Sigmoid colon (tissue), 7 donors: ENCODE measurements at regions of chr3 and their contacts with region 1.

Region 1: DNA sequence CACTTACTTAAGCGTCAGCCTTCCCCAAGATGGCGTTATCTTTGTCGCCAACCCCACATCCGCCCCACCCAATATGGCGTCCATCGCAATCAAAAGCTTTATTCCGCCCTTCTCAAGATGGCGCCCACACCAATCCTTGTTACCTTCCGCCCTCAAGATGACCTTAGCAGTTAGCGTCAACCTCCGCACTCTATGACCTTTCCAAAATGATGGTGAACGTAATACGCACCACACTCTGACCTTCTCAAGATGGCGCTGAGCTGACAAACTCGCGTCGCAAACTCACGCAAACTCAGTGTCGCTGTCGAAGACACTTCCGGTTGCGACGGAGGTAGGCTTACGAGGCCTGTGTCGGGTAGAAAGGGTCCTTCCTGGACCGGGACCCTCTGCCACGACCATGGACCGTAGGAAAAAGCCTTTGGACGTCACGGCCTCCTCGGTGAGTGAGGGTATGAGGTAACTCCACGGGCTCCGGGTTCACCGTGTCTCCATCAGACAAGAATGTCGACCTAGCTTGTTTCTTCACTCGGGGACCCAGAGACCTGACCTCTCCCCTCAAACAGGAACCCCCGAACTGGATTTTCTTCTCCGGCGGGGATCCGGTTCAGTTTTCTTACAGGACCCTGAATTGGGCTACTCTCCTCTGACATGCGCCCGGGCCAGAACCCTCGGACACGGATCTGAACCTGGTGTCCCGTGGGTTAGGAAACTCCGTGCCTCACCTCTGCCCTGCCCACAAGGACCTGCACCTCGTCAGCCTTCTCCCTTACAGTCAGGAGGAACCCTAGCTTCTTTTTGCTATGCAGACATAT is at the start of gene CCDC174:
- DNase-seq: peak; percentile 98
- H3K4me3 ChIP-seq: peak within 1 kb of the TSS; percentile 70 to 85 (median 74)
- H3K27ac ChIP-seq: peak within 1 kb of the TSS; percentile 84 to 90 (median 86)
- H3K4me1 ChIP-seq: peaks cover 0 to 29% (median 25%) of the 10 kb centered on the region in 4 donors
- H3K27me3 ChIP-seq: no peaks in the 10 kb centered on the region
- CTCF ChIP-seq: no peak
- EP300 ChIP-seq: no peak
- POLR2A ChIP-seq: peak; percentile 46 to 50
- total RNA-seq, gene CCDC174: 13.3 to 21.3 (median 19.2) TPM

Region 2: DNA sequence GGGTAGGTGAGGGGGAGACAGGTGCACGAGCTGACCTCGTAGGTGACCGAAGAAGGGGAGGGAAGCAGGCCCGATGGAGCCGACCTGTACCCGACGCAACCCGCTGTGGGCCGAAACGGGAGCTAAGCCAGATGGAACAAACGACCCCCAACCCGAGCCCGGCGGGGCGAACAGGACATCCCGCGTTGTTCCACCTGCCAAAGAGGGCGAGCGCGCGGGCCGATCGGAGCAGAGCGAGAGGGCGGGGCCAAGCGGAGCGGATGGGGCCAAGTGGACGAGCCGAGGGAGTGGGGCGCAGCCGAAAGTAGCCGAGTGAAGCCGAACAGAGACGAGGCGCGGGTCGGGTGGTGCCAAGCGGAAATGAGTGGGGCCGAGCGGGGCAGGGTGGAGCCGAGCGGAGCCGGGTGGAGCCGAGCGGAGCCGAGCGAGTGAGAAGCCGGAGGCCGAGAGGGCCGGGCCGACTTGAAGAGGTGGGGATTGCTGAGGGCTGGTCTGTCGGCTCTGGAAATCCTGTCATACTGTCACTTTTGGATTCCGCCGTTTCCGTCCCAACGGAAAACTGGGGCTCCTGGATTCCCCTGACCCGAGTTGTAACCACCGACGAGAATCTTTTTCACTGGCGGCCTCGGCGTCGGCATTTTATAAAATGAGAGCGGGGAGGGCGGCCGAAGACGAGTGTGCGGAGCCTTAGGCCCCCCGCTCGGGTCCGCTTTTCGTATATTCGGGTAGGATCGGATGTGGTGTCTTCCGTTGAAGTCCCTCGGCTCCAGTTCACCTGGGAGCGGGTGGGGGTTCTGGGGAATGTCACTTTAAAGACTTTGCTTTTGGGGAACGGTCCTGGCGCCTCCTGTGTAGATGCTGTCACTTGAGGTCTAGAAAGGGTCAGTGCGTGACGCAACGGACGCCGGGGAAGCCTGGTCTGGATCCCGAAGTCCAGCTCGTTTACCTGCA is 756.2 kb before region 1 on chr3:
- intact Hi-C with region 1: loop called (anchors 2 kb)
- DNase-seq: peak; percentile 97
- H3K4me3 ChIP-seq: peak overlapping the region; percentile 48 to 72 (median 68)
- H3K27ac ChIP-seq: peak overlapping the region; percentile 74 to 79 (median 77)
- H3K4me1 ChIP-seq: peaks cover 0 to 20% (median 15%) of the 10 kb centered on the region in 4 donors
- H3K27me3 ChIP-seq: no peaks in the 10 kb centered on the region
- CTCF ChIP-seq: no peak
- EP300 ChIP-seq: no peak
- POLR2A ChIP-seq: peak in 1 of 2 donors; percentile 85

Region 3: DNA sequence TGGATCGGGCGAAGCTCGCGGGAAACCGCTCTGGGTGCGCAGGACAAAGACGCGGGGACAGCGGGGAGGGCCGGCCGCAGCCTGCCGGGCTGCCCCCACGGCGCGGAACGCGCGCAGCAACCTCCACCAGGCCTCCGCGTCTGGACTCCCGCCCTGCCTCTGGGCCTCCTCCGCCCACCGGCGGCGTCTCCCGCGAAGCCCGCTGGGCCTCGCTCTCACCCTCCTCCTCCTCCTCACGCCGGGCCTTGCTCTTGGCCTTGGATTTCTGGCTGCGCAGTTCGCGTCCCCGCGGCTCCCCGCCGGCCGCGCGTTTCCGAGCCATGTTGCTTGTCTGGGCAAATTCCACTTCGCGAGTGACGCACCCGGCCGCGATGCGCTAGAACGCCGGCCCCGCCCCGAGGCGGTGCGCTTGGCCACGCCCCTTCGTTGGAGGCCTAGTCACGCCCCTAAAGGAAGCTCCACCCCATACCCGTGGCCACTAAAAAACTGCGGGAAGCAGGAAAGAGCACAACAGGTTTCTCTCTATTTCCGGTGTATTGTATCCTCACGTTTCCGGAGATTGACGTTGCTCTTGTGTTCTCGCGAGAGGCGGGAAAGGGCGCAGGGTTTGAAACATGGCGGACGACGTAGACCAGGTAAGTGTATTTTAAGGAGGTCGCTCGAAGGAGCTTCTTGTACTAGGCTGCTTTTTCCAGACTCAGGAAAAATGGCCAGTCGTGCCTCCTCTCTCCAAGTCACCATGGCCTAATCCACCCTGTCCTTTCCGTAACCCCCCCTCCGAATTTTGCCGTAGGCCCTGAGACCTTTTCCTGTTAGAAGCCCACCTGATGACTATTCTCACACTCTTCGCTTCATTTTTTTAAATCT is 473.2 kb before region 1 on chr3 and contains the starts of genes LSM3 and XPC:
- intact Hi-C with region 1: loop called (anchors 2 kb)
- DNase-seq: peak; percentile 99
- H3K4me3 ChIP-seq: peak within 1 kb of the TSS; percentile 62 to 89 (median 76)
- H3K27ac ChIP-seq: peak within 1 kb of the TSS; percentile 89 to 99 (median 96)
- H3K4me1 ChIP-seq: peaks cover 0 to 32% (median 29%) of the 10 kb centered on the region in 4 donors
- H3K27me3 ChIP-seq: no peaks in the 10 kb centered on the region
- CTCF ChIP-seq: no peak
- EP300 ChIP-seq: peak in 1 of 4 donors; percentile 86
- POLR2A ChIP-seq: peak; percentile 85 to 91
- total RNA-seq, gene LSM3: 8.0 to 17.1 (median 14.9) TPM
- total RNA-seq, gene XPC: 30.3 to 37.5 (median 32.6) TPM

Region 4: DNA sequence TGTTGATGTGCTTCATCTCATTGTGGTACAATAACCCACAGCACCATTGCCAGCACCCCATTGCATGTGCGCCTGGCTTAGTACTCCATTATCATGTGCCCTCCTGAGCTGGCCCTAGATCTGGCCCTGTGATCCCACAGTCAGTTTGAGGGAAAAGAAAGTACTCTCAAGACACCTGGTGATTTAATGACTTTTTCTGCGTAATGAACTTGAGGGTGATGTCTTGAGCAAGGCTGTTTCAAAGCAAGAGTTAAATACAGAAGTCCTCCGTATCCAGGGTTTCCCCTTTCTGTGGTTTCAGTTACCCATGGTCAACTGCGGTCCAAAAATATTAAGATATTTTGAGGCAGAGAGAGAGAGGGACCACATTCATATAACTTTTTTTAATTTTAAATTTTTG is 39.6 kb after region 1 on chr3:
- intact Hi-C with region 1: no loop called
- DNase-seq: no peak
- H3K4me3 ChIP-seq: no peak overlapping the region
- H3K27ac ChIP-seq: no peak overlapping the region
- H3K4me1 ChIP-seq: no peaks in the 10 kb centered on the region
- H3K27me3 ChIP-seq: no peaks in the 10 kb centered on the region
- CTCF ChIP-seq: no peak
- EP300 ChIP-seq: no peak
- POLR2A ChIP-seq: no peak

Region 5: DNA sequence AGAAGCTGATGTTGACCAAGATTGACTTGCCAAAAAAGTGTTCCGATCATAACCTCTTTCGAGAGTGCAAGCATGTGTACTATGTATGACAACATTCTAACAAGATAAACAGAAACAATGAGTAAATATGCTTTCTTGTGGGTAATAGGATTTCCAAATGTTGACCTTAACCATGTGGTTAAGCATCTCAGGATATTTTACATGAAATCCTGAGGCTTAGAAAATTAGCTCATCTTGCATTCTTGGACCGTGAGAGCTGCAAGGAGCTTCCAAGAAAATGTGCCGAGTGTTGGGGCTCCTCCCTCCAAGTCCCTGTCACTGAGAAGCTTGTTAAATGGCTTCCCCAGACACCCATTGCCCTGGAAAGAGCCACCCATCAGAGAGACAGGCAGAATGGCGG is 73.4 kb after region 1 on chr3:
- intact Hi-C with region 1: loop called (anchors 1 kb)
- DNase-seq: peak; percentile 82
- H3K4me3 ChIP-seq: no peak overlapping the region
- H3K27ac ChIP-seq: peak overlapping the region; percentile 73 to 78 (median 76)
- H3K4me1 ChIP-seq: peaks cover 0 to 36% (median 33%) of the 10 kb centered on the region in 4 donors
- H3K27me3 ChIP-seq: no peaks in the 10 kb centered on the region
- CTCF ChIP-seq: no peak
- EP300 ChIP-seq: no peak
- POLR2A ChIP-seq: no peak

Region 6: GRCh38 chr3:14774431-14774830 is 122.8 kb after region 1 on chr3:
- intact Hi-C with region 1: no loop called
- DNase-seq: peak; percentile 39
- H3K4me3 ChIP-seq: no peak overlapping the region
- H3K27ac ChIP-seq: no peak overlapping the region
- H3K4me1 ChIP-seq: no peaks in the 10 kb centered on the region
- H3K27me3 ChIP-seq: no peaks in the 10 kb centered on the region
- CTCF ChIP-seq: no peak
- EP300 ChIP-seq: no peak
- POLR2A ChIP-seq: no peak

Region 7: DNA sequence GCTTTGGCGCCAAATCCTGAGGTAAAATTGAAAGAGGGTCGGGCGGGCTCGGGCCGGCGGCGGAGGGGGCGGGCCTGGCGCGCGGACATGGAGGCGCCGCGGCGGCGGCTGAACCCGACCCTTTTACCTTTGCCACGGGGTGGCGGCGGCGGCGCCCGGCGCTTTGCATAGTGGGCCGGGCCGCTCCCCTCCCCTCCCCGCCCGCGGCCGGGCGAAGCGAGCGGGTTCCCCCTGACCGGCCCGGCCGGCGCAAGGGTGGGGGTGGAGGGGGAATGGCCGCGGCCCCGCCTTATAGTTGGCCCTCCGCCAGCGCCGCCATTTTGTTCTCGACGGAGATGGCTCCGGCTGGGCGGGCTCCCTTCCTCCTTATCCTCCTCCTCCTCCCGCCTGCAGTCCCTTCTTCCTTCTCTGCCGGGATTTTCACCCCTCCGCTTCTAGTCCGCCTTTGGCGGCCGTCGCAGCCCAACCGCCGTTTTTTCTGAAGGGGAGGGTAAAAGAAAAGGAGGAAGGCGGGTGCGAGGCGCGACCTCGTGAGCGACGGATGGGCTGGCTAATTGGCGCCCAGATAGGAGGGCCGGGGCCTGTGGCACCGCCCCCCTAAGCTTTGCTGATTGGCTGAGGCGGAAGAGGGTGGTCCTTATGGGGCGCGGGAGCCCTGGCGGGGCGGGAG is 296.4 kb after region 1 on chr3:
- intact Hi-C with region 1: loop called (anchors 10 kb)
- DNase-seq: peak; percentile 98
- H3K4me3 ChIP-seq: peak overlapping the region; percentile 52 to 99 (median 88)
- H3K27ac ChIP-seq: peak overlapping the region; percentile 92 to 100 (median 96)
- H3K4me1 ChIP-seq: peaks cover 0 to 54% (median 39%) of the 10 kb centered on the region in 4 donors
- H3K27me3 ChIP-seq: no peaks in the 10 kb centered on the region
- CTCF ChIP-seq: no peak
- EP300 ChIP-seq: no peak
- POLR2A ChIP-seq: no peak

Region 8: DNA sequence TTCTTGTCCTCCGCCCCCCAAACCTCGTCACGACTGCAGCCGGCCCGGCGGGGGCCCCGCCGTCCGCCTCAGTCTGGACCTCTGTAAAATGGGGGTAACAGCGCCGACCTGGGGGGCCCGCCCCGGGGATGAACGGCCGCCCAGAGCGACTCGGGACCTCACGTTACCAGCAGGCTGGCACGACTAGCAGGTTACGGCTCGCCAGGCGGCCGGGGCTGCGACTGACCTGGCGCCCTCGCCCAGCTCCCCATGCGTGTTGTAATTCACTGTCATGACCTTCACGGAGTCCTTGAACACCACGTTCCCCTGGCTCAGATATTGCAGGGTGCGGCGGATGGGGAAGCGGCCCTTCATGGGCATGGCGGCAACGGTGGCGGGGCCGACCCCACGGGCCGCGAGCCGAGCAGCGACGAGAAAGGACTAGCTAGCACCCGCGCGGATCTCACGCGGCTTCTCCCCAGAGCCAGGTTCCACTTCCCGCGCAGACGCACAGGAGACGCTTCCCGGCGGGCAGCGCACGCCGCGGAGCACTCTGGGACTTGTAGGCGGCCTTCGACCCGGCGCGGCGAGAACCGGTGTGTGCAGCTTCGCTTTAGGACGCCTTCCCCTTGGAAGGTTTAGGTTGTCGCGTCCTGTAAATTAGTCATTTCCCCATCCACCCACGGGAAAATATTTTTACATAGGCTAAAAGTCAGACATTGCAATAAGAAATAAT is 413.3 kb after region 1 on chr3 and contains the start of gene MRPS25:
- intact Hi-C with region 1: loop called (anchors 10 kb)
- DNase-seq: peak; percentile 95
- H3K4me3 ChIP-seq: peak within 1 kb of the TSS; percentile 64 to 76 (median 69)
- H3K27ac ChIP-seq: peak within 1 kb of the TSS; percentile 80 to 86 (median 84)
- H3K4me1 ChIP-seq: peaks cover 0 to 23% (median 16%) of the 10 kb centered on the region in 4 donors
- H3K27me3 ChIP-seq: no peaks in the 10 kb centered on the region
- CTCF ChIP-seq: no peak
- EP300 ChIP-seq: peak in 1 of 4 donors; percentile 54
- POLR2A ChIP-seq: peak; percentile 64 to 90
- total RNA-seq, gene MRPS25: 25.8 to 44.5 (median 33.1) TPM

Region 9: GRCh38 chr3:15098503-15099363 is 447.1 kb after region 1 on chr3 and contains the start of gene RBSN:
- intact Hi-C with region 1: loop called (anchors 10 kb)
- DNase-seq: peak; percentile 97
- H3K4me3 ChIP-seq: peak within 1 kb of the TSS; percentile 72 to 84 (median 78)
- H3K27ac ChIP-seq: peak within 1 kb of the TSS; percentile 84 to 89 (median 86)
- H3K4me1 ChIP-seq: peaks cover 0 to 49% (median 30%) of the 10 kb centered on the region in 4 donors
- H3K27me3 ChIP-seq: no peaks in the 10 kb centered on the region
- CTCF ChIP-seq: no peak
- EP300 ChIP-seq: peak in 1 of 4 donors; percentile 19
- POLR2A ChIP-seq: peak; percentile 87 to 89
- total RNA-seq, gene RBSN: 29.1 to 41.3 (median 38.0) TPM